AG04449 (cell line): ENCODE measurements at regions of chr12 and their contacts with region 1.

Region 1: DNA sequence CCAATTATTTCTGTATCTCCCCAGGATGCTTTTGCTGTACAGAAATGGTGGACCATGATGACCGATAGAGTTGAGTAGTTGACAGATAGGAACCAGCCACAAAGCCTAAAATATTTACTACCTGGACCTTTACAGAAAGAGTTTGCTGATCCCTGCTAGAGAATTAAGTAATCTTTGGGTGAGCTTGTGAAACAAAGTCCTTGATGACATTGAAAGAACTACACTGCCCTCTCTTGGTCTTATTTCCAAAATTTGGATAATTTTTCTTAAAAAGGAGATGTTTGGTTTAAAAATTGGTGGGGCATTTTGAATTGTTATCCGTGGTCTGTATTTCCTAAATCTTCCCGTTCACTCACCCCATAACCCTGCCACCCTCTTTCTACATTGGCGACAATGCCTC is 13.7 kb upstream of the TCTN1 start:
- DNase-seq: no peak
- H3K4me3 ChIP-seq: no peak overlapping the region
- CTCF ChIP-seq: peak; percentile 5

Region 2: GRCh38 chr12:110304061-110304551 is 296.1 kb before region 1 on chr12:
- CTCF ChIA-PET with region 1: no interaction called
- POLR2A ChIA-PET with region 1: no interaction called
- DNase-seq: no peak
- H3K4me3 ChIP-seq: no peak overlapping the region
- CTCF ChIP-seq: no peak

Region 3: DNA sequence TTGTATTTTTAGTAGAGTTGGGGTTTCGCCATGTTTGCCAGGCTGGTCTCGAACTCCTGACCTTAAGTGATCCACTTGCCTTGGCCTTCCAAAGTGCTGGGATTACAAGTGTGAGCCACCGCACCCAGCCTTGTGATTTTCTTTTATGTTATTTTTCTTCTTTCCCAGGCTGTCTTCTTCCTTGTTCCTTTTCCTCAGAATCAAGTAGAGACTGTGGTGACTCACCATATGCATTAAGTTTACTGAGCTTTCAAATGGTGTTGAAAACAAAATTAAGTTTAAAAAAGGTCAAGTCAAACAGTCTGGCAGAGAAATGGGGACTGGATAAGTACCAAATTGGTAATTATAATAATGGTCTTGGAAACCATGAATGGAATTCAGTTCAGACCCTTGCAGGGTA is 155.8 kb before region 1 on chr12:
- CTCF ChIA-PET with region 1: interaction called, 195 read pairs
- POLR2A ChIA-PET with region 1: no interaction called
- DNase-seq: no peak
- H3K4me3 ChIP-seq: no peak overlapping the region
- CTCF ChIP-seq: no peak

Region 4: DNA sequence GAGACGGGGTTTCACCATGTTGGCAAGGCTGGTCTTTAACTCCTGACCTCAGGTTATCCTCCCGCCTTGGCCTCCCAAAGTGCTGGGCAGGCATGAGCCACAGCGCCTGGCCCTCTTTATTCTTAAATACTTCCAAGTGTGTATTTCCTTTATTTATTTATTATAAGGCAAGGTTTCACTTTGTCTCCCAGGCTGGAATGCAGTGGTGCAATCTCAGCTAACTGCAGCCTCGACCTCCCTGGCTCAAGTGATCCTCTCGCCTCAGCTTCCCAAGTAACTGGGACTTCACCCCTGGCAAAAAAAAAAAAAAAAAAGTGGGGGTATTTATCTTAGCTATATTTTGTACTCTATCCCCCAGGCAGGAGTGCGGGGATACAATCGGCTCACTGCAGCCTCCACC is 124.8 kb before region 1 on chr12:
- CTCF ChIA-PET with region 1: interaction called, 179 read pairs
- POLR2A ChIA-PET with region 1: no interaction called
- DNase-seq: no peak
- H3K4me3 ChIP-seq: no peak overlapping the region
- CTCF ChIP-seq: no peak

Region 5: DNA sequence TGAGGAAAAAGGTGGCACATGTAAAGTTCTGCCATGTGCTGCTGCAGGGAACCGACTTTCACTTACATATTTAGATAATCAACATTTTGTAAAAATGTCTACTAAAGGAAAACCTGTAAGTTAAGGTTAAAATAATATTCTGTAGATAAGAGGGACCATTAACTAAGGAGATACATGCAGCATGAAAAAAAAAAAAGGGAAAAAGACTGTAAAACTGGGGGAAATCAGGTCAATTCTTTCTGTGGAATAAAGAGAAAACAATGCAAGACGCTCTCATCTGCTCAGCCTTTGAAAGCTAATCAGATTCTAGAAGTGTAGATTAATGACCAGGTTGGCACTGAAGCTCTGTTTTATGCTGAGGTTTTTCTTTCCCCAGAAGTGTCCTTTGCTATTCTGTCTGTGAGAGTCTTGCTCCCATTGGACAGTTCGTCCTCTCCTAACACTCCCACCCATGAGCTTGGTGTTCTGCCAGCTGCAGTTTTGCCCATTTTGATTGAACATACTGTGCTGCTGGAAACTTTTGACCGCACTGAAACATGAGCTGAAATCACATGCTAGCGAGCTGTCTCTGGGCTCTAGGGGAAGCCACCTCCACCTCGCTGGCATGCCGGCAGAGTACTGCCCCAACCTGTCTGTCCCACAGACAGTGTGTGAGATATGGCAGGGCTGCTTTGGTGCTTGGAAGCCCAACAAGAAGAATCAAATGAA is 56.8 kb before region 1 on chr12:
- CTCF ChIA-PET with region 1: interaction called, 161 read pairs
- POLR2A ChIA-PET with region 1: no interaction called
- DNase-seq: no peak
- H3K4me3 ChIP-seq: no peak overlapping the region
- CTCF ChIP-seq: no peak

Region 6: GRCh38 chr12:110583137-110584059 is 16.9 kb before region 1 on chr12 and contains the start of gene PPTC7:
- CTCF ChIA-PET with region 1: interaction called, 49 read pairs
- POLR2A ChIA-PET with region 1: no interaction called
- DNase-seq: peak; percentile 73
- H3K4me3 ChIP-seq: peak within 1 kb of the TSS; percentile 90
- CTCF ChIP-seq: no peak

Region 7: GRCh38 chr12:110860833-110861296 is 260.6 kb after region 1 on chr12:
- CTCF ChIA-PET with region 1: no interaction called
- POLR2A ChIA-PET with region 1: no interaction called
- DNase-seq: no peak
- H3K4me3 ChIP-seq: no peak overlapping the region
- CTCF ChIP-seq: no peak

Region 8: DNA sequence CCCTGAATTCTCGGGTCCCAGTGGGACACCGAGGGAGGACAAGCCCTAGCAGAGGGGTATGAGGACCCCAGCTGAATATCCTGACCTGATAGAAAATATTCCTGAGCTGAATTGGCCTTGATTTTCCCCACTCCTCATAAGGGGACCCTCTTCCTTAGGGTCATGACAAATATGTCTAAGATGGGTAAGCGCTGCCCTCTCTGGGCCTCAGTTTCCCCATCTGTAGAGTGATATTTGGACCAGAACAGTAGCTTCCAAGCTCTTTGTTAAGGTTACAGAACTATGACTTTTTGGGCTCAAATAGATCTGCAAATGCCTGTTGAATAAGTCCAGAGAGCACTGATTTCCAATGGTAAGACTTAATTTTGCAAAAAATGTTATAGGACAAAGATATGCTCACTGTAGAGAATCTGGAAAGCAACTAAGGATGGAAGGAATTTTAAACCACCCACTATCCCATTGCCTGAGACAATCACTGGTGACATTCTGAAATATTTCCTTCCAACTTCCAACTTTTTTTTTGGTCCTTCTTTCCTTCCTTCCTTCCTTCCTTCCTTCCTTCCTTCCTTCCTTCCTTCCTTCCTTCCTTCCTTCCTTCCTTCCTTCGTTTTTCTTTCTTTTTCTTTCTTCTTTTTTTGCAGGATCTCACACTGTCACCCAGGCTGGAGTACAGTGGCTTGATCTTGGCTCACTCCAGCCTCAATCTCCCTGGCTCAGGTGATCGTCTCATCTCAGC is 288.2 kb after region 1 on chr12:
- CTCF ChIA-PET with region 1: interaction called, 30 read pairs
- POLR2A ChIA-PET with region 1: no interaction called
- DNase-seq: no peak
- H3K4me3 ChIP-seq: no peak overlapping the region
- CTCF ChIP-seq: no peak

Region 9: GRCh38 chr12:110957652-110958051 is 357.4 kb after region 1 on chr12:
- CTCF ChIA-PET with region 1: no interaction called
- POLR2A ChIA-PET with region 1: no interaction called
- DNase-seq: no peak
- H3K4me3 ChIP-seq: no peak overlapping the region
- CTCF ChIP-seq: no peak